ENCODE measurements at regions of chr11 and their contacts with region 1.

Region 1: GRCh38 chr11:33039274-33040032 is at the start of gene TCP11L1:
- DNase-seq: peak; percentile 94
- H3K4me3 Mint-ChIP-seq: peak within 1 kb of the TSS; percentile 93
- H3K27ac Mint-ChIP-seq: peak within 1 kb of the TSS; percentile 93
- H3K4me1 Mint-ChIP-seq: peaks cover 21% of the 10 kb centered on the region
- H3K27me3 Mint-ChIP-seq: peaks cover 12% of the 10 kb centered on the region
- total RNA-seq, gene TCP11L1: 12.5 and 14.4 TPM in 2 replicates

Region 2: DNA sequence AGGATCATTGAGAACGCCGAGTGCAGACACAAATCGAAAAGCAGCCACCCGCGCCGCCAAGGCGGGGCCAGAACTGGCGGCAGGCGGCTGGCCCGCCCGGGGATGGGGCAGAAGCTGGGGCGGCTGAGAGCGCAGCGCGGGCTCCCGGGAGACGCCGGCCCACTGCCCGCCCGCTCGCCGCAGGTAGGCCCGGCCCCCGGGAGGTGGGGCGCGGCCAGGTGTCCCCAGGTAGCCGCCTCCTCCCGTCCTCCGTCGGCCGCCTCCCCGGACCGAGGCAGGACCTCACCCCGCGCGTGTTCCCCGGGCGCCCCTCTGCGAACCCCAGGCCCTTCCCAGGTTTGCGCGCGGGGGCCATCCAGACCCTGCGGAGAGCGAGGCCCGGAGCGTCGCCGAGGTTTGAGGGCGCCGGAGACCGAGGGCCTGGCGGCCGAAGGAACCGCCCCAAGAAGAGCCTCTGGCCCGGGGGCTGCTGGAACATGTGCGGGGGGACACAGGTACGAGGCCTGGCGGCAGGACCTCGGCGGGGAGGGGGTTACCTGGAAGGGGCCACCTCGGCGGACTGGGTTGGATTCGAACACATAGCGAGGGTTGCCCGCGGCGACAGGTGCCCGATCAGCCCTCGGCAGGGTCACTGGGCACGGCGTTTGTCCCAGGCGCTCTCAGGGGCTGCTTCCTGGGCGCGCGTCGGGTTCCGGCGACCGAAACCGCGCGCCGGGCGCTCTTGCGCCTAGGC is 209.6 kb before region 1 on chr11 and contains the start of gene PRRG4:
- intact Hi-C with region 1: loop called (anchors 1 kb)
- DNase-seq: peak; percentile 87
- H3K4me3 Mint-ChIP-seq: peak within 1 kb of the TSS; percentile 92
- H3K27ac Mint-ChIP-seq: peak within 1 kb of the TSS; percentile 82
- H3K4me1 Mint-ChIP-seq: peaks cover 14% of the 10 kb centered on the region
- H3K27me3 Mint-ChIP-seq: peaks cover 31% of the 10 kb centered on the region
- total RNA-seq, gene PRRG4: 0.56 and 0.85 TPM in 2 replicates

Region 3: GRCh38 chr11:33015621-33016551 is 23.6 kb before region 1 on chr11 and contains the start of gene DEPDC7:
- intact Hi-C with region 1: loop called (anchors 1 kb)
- DNase-seq: peak; percentile 93
- H3K4me3 Mint-ChIP-seq: peak within 1 kb of the TSS; percentile 84
- H3K27ac Mint-ChIP-seq: no peak within 1 kb of the TSS
- H3K4me1 Mint-ChIP-seq: peaks cover 16% of the 10 kb centered on the region
- H3K27me3 Mint-ChIP-seq: peaks cover 61% of the 10 kb centered on the region
- total RNA-seq, gene DEPDC7: 0.64 and 0.84 TPM in 2 replicates

Measured in activated CD4-positive, alpha-beta T cell treated with anti-CD3 and anti-CD28 coated beads, Interleukin-2, amount 10 ng/mL, durations not matched to agents 24 days and 14 days (primary cell).